ENCODE measurements at regions of chr17 and their contacts with region 1.

Region 1: GRCh38 chr17:48543107-48543853 is 1.6 kb downstream of the HOXB2 start:
- DNase-seq: peak; percentile 29 to 44
- ATAC-seq: peak; percentile 13 to 63 (median 42)
- H3K4me3 ChIP-seq: peak overlapping the region; percentile 47 to 67 (median 60)
- H3K27ac ChIP-seq: peak overlapping the region; percentile 44 to 92 (median 86)
- H3K4me1 ChIP-seq: peaks cover 0 to 42% (median 17%) of the 10 kb centered on the region in 9 donors
- H3K27me3 ChIP-seq: peaks cover 9 to 100% (median 93%) of the 10 kb centered on the region in 7 donors
- CTCF ChIP-seq: peak in 2 of 9 donors; percentile 6 to 15

Region 2: GRCh38 chr17:48568499-48569239 is 25.4 kb after region 1 on chr17:
- intact Hi-C with region 1: loop called in 1 of 10 experiments (anchors 2 kb)
- DNase-seq: no peak
- ATAC-seq: no peak
- H3K4me3 ChIP-seq: peak overlapping the region in 2 of 10 donors; percentile 10 to 18
- H3K27ac ChIP-seq: peak overlapping the region in 3 of 10 donors; percentile 0 to 79 (median 65)
- H3K4me1 ChIP-seq: peaks cover 0 to 20% (median 4%) of the 10 kb centered on the region in 9 donors
- H3K27me3 ChIP-seq: peaks cover 38 to 100% (median 100%) of the 10 kb centered on the region in 7 donors
- CTCF ChIP-seq: no peak

Region 3: GRCh38 chr17:48577946-48578615 is 34.8 kb after region 1 on chr17 and contains the start of gene HOXB4:
- intact Hi-C with region 1: loop called in 2 of 10 experiments (anchors 5 kb)
- DNase-seq: peak; percentile 20 to 52
- ATAC-seq: peak in 6 of 8 donors; percentile 26 to 73 (median 56)
- H3K4me3 ChIP-seq: peak within 1 kb of the TSS; percentile 30 to 61 (median 40)
- H3K27ac ChIP-seq: peak within 1 kb of the TSS in 6 of 10 donors; percentile 21 to 83 (median 68)
- H3K4me1 ChIP-seq: peaks cover 0 to 52% (median 7%) of the 10 kb centered on the region in 9 donors
- H3K27me3 ChIP-seq: peaks cover 65 to 100% (median 100%) of the 10 kb centered on the region in 7 donors
- CTCF ChIP-seq: no peak
- total RNA-seq, gene HOXB4: 0.14 to 1.6 (median 0.29) TPM in 9 of 10 donors, not detected in the other

Measured in heart right ventricle (tissue), 16 donors.